RWPE1 (cell line): ENCODE measurements at regions of chr15 and their contacts with region 1.

Region 1: GRCh38 chr15:33132722-33133345 is 61.7 kb downstream of the FMN1 start:
- DNase-seq: peak; percentile 90
- H3K27ac ChIP-seq: no peak overlapping the region
- CTCF ChIP-seq: peak; percentile 90

Region 2: GRCh38 chr15:33021806-33022389 is 110.9 kb before region 1 on chr15:
- CTCF ChIA-PET with region 1: interaction called, 15 read pairs
- POLR2A ChIA-PET with region 1: no interaction called
- DNase-seq: peak; percentile 72
- H3K27ac ChIP-seq: no peak overlapping the region
- CTCF ChIP-seq: peak; percentile 83

Region 3: DNA sequence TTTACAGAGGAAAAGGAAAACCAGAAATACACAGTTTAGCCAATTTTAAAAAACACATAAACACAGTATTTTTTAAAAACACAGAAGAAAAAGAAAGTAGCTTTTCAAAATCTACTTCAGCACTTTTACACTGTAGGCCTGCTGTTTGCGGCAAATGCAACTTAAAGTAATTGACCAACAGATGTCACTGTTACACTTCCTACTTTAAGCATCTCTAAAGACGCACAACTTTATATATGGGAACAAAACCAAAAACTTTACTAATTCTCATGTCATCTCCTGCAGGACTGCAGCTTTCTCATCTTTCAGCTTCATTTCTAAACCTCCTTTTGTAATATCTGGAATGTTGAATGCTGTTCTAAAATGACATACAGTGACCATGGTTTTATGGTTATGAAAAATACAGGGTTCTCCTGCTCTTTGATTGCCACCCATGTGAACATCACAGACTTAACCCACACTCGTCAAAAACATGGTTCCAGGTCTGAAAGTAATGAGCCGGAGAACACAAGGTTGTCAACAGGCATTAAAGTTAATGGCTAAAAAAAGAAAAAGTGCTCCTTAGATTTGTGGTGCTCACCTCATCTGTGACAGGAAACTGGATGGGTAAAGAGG is 46.2 kb before region 1 on chr15:
- CTCF ChIA-PET with region 1: interaction called, 15 read pairs
- POLR2A ChIA-PET with region 1: no interaction called
- DNase-seq: peak; percentile 44
- H3K27ac ChIP-seq: no peak overlapping the region
- CTCF ChIP-seq: peak; percentile 87

Region 4: GRCh38 chr15:33145447-33145846 is 12.6 kb after region 1 on chr15:
- CTCF ChIA-PET with region 1: no interaction called
- POLR2A ChIA-PET with region 1: no interaction called
- DNase-seq: peak; percentile 87
- H3K27ac ChIP-seq: no peak overlapping the region
- CTCF ChIP-seq: no peak